ENCODE measurements at regions of chr5 and their contacts with region 1.

Region 1: GRCh38 chr5:60960591-60960990 is 15.6 kb downstream of the NDUFAF2 start:
- DNase-seq: peak; percentile 46
- ATAC-seq: 0 out of 2 replicates have a peak, but pooled peaks have one; percentile 59
- H3K4me3 ChIP-seq: no peak overlapping the region
- H3K27ac ChIP-seq: no peak overlapping the region
- H3K4me1 ChIP-seq: no peaks in the 10 kb centered on the region
- H3K27me3 ChIP-seq: no peaks in the 10 kb centered on the region
- CTCF ChIP-seq: peak; percentile 62
- POLR2A ChIP-seq: no peak
- RAD21 ChIP-seq: peak; percentile 38

Region 2: DNA sequence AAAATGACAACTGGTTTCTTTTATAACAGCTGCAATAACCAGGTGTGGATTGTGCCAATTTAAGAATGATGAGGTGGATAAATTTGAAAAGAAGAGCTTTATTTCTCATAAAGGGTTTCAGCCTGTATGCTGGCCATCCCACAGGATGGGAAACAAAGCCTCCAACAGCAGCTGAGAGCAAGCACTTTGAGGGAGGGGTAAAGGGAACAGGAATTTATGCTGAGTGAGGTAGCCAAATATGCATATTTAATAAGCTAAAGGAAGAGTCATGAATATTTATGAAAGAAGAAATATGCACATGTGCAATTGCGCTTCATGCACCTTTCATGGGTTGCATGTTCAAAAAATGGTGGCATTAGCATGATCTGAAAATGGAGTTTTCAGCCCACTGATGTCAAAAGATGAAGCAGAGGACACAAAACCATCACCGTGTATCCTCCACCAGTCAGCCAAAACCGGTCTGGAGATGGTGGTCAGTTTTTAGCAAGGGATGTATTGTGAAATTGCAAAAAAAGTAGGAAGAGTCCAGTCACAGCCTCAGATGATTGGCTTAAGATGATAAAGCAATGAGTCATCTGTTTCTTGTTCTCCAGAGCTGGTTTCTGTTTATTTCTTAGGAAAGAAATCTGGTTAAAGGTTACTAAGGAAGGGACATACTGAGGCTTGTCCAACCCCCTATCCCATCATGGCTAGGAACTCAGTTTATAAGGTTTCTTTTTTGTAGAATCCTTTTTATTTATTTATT is 308.5 kb before region 1 on chr5:
- CTCF ChIA-PET with region 1: no interaction called
- POLR2A ChIA-PET with region 1: no interaction called
- dilution Hi-C with region 1: no loop called
- in situ Hi-C with region 1: no loop called
- intact Hi-C with region 1: no loop called
- DNase-seq: peak; percentile 94
- ATAC-seq: peak; percentile 91
- H3K4me3 ChIP-seq: no peak overlapping the region
- H3K27ac ChIP-seq: peak overlapping the region; percentile 42; the same call in 1 of the 2 replicates
- H3K4me1 ChIP-seq: no peaks in the 10 kb centered on the region
- H3K27me3 ChIP-seq: no peaks in the 10 kb centered on the region
- CTCF ChIP-seq: no peak
- POLR2A ChIP-seq: no peak
- RAD21 ChIP-seq: no peak

Region 3: GRCh38 chr5:61162010-61162831 is 201.6 kb after region 1 on chr5 and contains the start of gene SMIM15:
- CTCF ChIA-PET with region 1: no interaction called
- POLR2A ChIA-PET with region 1: no interaction called
- dilution Hi-C with region 1: no loop called
- in situ Hi-C with region 1: no loop called
- intact Hi-C with region 1: loop called (anchors 5 kb)
- DNase-seq: peak; percentile 87
- ATAC-seq: peak; percentile 95
- H3K4me3 ChIP-seq: peak within 1 kb of the TSS; percentile 94
- H3K27ac ChIP-seq: peak within 1 kb of the TSS; percentile 95
- H3K4me1 ChIP-seq: peaks cover 5% of the 10 kb centered on the region
- H3K27me3 ChIP-seq: no peaks in the 10 kb centered on the region
- CTCF ChIP-seq: no peak
- POLR2A ChIP-seq: peak; percentile 70
- RAD21 ChIP-seq: 0 out of 2 replicates have a peak, but pooled peaks have one; percentile 3
- total RNA-seq, gene SMIM15: 94.3 and 101 TPM in 2 replicates

Region 4: GRCh38 chr5:61817472-61818326 is 857.1 kb after region 1 on chr5:
- CTCF ChIA-PET with region 1: no interaction called
- POLR2A ChIA-PET with region 1: no interaction called
- dilution Hi-C with region 1: no loop called
- in situ Hi-C with region 1: no loop called
- intact Hi-C with region 1: loop called (anchors 2 kb)
- DNase-seq: peak; percentile 39
- ATAC-seq: peak; percentile 94
- H3K4me3 ChIP-seq: no peak overlapping the region
- H3K27ac ChIP-seq: no peak overlapping the region
- H3K4me1 ChIP-seq: no peaks in the 10 kb centered on the region
- H3K27me3 ChIP-seq: peaks cover 2% of the 10 kb centered on the region
- CTCF ChIP-seq: peak; percentile 57
- POLR2A ChIP-seq: no peak
- RAD21 ChIP-seq: peak; percentile 52

Region 5: DNA sequence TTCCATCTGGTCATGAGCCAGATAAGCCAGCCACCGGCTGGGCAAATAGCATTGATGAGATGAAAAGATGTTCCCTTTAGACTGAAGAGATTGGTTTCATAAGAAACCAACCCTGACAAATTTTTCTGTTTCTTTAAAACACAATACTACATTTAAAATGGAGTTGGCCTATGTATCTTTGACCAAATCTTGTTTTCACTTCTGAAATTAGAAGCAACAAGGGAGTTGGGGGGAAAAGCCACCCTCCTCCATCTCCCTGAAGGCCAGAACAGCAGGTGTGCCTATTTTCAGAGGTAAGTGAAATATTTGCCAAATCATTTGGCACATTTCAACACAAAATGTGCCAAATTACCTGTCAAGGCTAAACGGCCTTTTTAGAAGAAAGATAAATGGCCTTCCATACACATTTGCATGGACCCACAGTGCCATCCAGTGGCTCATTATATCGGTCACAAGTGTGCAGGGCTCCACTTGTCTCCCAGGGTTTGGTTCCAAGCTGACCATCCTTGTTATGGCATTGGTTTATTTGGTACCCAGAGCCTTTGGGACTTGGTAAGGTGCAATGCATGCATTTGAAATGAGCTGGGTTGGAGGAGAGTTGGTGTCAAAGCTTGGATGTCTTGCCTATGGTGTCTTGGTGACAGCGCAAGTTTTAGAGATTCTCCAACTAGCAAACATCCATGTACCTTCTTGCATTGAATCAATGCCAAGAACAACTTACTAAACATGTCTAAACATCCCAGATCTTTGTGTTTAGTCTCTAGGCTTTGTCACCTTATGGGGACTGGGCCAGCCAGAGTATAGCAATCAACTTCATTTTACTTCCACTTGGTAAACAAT is 973.4 kb after region 1 on chr5:
- CTCF ChIA-PET with region 1: no interaction called
- POLR2A ChIA-PET with region 1: no interaction called
- dilution Hi-C with region 1: no loop called
- in situ Hi-C with region 1: loop called (anchors 25 kb)
- intact Hi-C with region 1: loop called (anchors 1 kb)
- DNase-seq: peak; percentile 29
- ATAC-seq: peak; percentile 57; the same call in 1 of the 2 replicates
- H3K4me3 ChIP-seq: no peak overlapping the region
- H3K27ac ChIP-seq: no peak overlapping the region
- H3K4me1 ChIP-seq: no peaks in the 10 kb centered on the region
- H3K27me3 ChIP-seq: no peaks in the 10 kb centered on the region
- CTCF ChIP-seq: peak; percentile 52
- POLR2A ChIP-seq: no peak
- RAD21 ChIP-seq: peak; percentile 62

Region 6: DNA sequence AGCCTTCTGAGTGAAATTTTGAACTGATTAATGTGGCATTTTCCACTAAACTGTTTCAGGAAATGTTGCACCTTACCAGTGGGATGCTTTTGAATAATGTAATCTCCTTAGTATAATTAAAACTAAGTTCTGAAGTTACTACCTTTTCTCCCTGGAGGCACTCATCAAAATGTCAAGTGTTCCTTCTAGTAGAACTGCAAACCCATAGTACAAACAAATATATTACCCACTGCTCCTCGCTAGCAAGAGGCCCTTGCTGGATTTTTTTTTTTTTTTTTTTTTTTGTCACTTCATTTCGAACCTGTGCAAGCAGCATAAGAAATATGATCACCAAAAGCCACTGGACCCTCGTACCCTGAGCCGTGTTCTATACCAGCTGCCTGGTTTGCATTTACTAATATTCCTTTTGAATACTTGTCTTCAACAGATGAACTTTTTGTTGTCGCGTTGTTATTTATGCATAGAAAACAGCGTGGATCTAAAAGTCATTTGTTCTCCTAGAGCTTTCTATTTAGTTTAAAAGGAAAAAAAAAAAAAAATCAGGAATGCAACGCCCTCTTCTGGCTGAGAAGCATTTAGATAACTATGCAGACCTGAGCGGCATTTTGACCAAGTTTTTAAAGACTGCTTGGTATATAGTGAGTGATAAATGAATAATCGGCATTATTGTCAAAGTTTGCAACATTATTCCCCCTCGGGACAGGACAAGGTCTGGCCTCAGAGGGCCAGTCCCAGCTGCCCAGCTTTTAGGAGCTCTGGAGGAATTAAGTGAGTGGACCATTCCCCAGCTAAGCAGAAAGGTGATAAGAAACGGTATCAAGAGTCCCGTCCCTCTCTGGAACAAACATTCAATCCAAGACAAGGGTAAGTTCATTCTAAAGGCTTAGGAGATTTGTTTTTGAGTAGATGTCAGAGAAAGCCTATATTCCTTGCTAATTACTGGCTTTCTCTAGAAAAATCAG is 1183.0 kb after region 1 on chr5:
- CTCF ChIA-PET with region 1: no interaction called
- POLR2A ChIA-PET with region 1: no interaction called
- dilution Hi-C with region 1: no loop called
- in situ Hi-C with region 1: no loop called
- intact Hi-C with region 1: loop called (anchors 2 kb)
- DNase-seq: peak; percentile 40
- ATAC-seq: peak; percentile 72
- H3K4me3 ChIP-seq: no peak overlapping the region
- H3K27ac ChIP-seq: no peak overlapping the region
- H3K4me1 ChIP-seq: no peaks in the 10 kb centered on the region
- H3K27me3 ChIP-seq: no peaks in the 10 kb centered on the region; the same call in none of the 2 replicates
- CTCF ChIP-seq: peak; percentile 55
- POLR2A ChIP-seq: no peak
- RAD21 ChIP-seq: peak; percentile 27; the same call in 1 of the 2 replicates